Calu3 (cell line): ENCODE measurements at regions of chr10 and their contacts with region 1.

Region 1: DNA sequence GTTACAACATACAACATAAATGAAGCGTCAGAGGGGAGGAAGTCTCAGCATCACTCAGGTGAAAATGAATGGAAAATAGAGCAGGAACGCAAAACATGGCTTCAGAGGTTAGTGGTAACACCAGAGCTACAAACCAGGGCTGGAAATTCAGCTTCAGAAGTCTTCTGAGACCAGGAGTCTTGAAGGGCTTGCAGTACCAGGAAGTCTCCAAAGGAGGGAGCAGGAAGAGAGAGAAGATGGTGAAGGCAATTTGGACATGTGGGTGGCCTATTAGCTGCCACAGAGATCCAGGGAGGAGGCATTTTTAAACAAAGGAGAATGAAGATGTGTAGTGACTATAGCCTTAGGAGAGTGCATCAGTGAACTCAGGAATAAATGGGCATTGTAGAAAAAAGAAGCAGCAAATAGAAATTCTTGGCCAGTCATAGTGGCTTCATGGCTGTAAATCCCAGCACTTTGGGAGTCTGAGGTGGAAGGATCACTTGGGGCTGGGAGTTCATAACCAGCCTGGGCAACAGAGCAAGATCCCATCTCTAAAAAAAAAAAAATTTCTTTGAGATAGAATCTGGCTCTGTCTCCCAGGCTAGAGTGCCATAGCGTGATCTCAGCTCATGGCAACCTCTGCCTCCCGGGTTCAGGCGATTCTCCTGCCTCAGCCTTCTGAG is 9.3 kb upstream of the TET1 start:
- DNase-seq: peak; percentile 68
- H3K4me3 Mint-ChIP-seq: no peak overlapping the region
- H3K27ac Mint-ChIP-seq: no peak overlapping the region
- H3K4me1 Mint-ChIP-seq: no peaks in the 10 kb centered on the region
- H3K27me3 Mint-ChIP-seq: no peaks in the 10 kb centered on the region
- CTCF ChIP-seq: peak; percentile 82

Region 2: GRCh38 chr10:68506411-68506810 is 44.5 kb before region 1 on chr10:
- CTCF ChIA-PET with region 1: no interaction called
- intact Hi-C with region 1: no loop called
- DNase-seq: no peak
- H3K4me3 Mint-ChIP-seq: no peak overlapping the region
- H3K27ac Mint-ChIP-seq: no peak overlapping the region
- H3K4me1 Mint-ChIP-seq: no peaks in the 10 kb centered on the region
- H3K27me3 Mint-ChIP-seq: no peaks in the 10 kb centered on the region
- CTCF ChIP-seq: no peak

Region 3: DNA sequence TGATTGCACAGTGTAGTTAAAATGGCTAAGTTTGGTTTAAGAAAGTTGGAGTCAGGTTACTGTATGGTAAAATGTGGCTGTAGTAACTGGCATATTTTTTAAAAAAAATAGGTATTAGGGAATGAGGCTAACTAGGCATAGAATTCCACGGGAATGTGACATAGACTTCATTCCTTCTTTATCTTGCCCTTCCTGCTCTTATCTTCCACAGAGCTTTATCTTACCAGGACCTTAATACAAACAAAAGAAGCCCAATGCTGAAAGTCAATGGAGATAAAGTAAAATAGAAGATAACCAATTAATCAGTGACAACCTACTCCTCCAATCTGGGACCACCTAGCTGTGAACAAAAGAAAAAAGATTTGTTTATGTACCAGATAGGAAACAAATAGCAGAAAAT is 67.4 kb after region 1 on chr10:
- CTCF ChIA-PET with region 1: interaction called, 10 read pairs
- intact Hi-C with region 1: no loop called
- DNase-seq: no peak
- H3K4me3 Mint-ChIP-seq: no peak overlapping the region
- H3K27ac Mint-ChIP-seq: no peak overlapping the region
- H3K4me1 Mint-ChIP-seq: peaks cover 8% of the 10 kb centered on the region
- H3K27me3 Mint-ChIP-seq: no peaks in the 10 kb centered on the region
- CTCF ChIP-seq: no peak

Region 4: DNA sequence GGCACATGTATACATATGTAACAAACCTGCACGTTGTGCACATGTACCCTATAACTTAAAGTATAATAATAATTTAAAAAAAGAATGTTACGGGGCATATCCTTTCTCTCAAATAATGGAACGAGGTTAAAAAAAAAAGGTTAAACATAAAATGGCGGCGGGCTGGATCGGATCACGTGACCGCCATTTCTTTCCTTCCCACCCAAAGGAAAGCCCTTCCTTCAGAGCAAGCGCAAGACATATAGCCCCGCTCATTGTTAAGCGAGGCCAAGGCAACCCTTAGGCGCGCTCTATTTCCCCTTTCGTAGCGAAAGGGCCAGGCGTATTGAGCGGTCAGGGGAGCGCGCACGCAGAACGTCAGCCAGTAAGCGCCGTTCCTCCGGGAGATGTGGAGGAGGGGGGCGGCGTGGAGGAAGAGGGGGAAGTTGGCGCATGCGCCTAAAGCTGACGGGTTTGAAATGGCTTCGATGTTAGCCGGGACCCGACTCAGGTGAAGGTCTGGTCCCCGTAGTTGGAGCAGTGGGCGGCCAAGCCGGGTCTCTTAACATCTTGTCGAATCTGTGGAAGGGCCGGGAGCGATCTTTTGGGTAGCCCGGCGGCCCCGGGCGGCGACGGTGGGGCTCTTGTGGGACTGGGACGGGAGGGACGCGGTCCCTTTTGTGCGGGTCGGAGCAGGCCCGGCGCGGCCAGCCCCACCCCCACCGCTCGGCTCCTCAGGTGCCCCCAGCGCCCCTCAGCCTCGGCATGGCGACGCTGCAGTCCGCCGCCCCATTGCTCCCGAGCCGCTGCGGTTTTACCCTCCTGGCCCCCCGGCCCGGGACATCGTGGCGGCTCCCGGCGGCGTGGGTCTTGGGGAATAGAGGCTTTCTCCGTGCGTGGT is 170.2 kb after region 1 on chr10 and contains the start of gene CCAR1:
- CTCF ChIA-PET with region 1: interaction called, 4 read pairs
- intact Hi-C with region 1: loop called (anchors 10 kb)
- DNase-seq: peak; percentile 98
- H3K4me3 Mint-ChIP-seq: peak within 1 kb of the TSS; percentile 92
- H3K27ac Mint-ChIP-seq: peak within 1 kb of the TSS; percentile 99
- H3K4me1 Mint-ChIP-seq: peaks cover 11% of the 10 kb centered on the region
- H3K27me3 Mint-ChIP-seq: no peaks in the 10 kb centered on the region
- CTCF ChIP-seq: no peak
- total RNA-seq, gene CCAR1: 105 and 113 TPM in 2 replicates